Naive thymus-derived CD4-positive, alpha-beta T cell (primary cell): ENCODE measurements at regions of chr2 and their contacts with region 1.

Region 1: GRCh38 chr2:8303322-8303832 is 378.5 kb upstream of the ID2 start:
- DNase-seq: peak in 8 of 9 donors; percentile 10 to 73 (median 54)
- ATAC-seq: peak; percentile 75
- H3K4me3 ChIP-seq: peak overlapping the region; percentile 34
- H3K4me3 Mint-ChIP-seq: peak overlapping the region in 9 of 10 donors; percentile 3 to 77 (median 50)
- H3K27ac ChIP-seq: no peak overlapping the region
- H3K27ac Mint-ChIP-seq: peak overlapping the region in 6 of 9 donors; percentile 15 to 85 (median 47)
- H3K4me1 ChIP-seq: peaks cover 14 to 53% of the 10 kb centered on the region in 2 donors
- H3K4me1 Mint-ChIP-seq: peaks cover 25 to 88% (median 39%) of the 10 kb centered on the region in 7 donors
- H3K27me3 ChIP-seq: no peaks in the 10 kb centered on the region
- H3K27me3 Mint-ChIP-seq: no peaks in the 10 kb centered on the region

Region 2: DNA sequence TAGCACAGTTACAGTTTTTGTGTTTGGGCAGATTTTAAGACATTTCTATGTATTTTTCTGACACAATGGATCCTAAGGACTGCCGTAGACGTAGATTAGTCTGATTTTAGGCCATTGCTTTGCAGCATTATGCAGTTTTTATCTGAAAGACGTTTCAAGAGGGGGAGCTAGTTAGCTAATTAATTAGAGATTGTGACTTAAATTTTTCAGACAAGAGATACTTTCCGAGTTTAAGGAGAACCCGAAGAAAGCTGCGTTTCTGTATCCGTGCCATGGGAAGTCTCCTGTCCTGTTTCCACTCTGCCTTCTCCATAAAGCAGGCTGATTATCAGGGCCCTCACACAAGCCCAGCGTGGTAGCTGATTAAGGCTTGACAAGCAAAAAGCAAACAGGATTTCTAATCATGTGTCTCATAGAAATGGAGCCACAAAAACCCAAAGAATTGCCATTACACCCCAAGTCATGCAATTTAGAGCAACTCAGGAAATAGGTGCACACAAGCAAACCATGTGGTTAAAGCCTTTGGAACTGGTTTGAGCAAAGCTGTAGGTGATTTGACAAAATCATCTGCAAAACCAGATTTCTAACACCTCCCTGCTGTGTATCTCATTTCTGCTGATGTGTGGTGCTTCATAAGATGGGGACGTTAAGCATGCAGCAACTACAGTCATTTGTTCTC is 578.1 kb before region 1 on chr2:
- CTCF ChIA-PET with region 1: no interaction called
- POLR2A ChIA-PET with region 1: no interaction called
- intact Hi-C with region 1: loop called in 1 of 2 experiments (anchors 10 kb)
- DNase-seq: peak in 5 of 9 donors; percentile 17 to 51 (median 38)
- ATAC-seq: peak; percentile 78
- H3K4me3 ChIP-seq: peak overlapping the region; percentile 25
- H3K4me3 Mint-ChIP-seq: peak overlapping the region in 9 of 10 donors; percentile 26 to 86 (median 58)
- H3K27ac ChIP-seq: no peak overlapping the region
- H3K27ac Mint-ChIP-seq: peak overlapping the region; percentile 8 to 89 (median 65)
- H3K4me1 ChIP-seq: peaks cover 17 to 34% of the 10 kb centered on the region in 2 donors
- H3K4me1 Mint-ChIP-seq: peaks cover 13 to 63% (median 34%) of the 10 kb centered on the region in 7 donors
- H3K27me3 ChIP-seq: no peaks in the 10 kb centered on the region
- H3K27me3 Mint-ChIP-seq: no peaks in the 10 kb centered on the region

Region 3: DNA sequence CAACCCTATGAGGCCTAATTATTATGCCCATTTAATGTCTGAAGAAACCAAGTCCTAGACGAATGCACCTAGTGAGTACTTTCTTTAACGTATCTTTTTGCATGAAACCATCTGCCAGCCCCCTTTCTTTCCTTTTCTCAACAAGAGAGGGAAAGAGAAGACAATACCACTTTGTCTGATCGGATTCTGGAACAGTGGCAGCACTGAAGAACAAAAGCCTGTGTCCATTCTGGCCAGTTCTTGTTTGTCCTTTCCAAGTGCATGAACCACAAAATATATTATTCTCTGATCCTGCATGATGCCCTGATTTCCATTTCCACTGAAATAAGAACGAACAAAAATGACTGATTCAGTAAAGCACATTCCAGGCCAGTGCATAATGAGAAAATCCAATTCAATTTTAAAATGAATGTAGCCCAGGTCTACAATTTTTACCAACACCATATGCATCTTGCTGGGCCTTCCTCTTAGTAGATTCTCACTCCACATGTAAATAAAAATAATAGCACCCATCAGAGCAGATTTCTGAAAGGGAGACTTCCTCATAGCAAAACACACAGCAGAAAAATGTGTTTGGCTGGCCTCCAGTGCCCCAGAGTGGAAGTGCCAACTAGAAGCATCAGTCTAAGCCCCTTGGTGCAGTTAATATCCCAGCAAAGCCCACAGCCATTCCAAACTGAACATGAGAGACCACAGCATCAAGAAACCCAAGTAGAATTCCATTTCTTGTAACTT is 44.1 kb before region 1 on chr2:
- CTCF ChIA-PET with region 1: no interaction called
- POLR2A ChIA-PET with region 1: no interaction called
- intact Hi-C with region 1: no loop called
- DNase-seq: no peak
- ATAC-seq: no peak
- H3K4me3 ChIP-seq: no peak overlapping the region
- H3K4me3 Mint-ChIP-seq: no peak overlapping the region
- H3K27ac ChIP-seq: no peak overlapping the region
- H3K27ac Mint-ChIP-seq: no peak overlapping the region
- H3K4me1 ChIP-seq: no peaks in the 10 kb centered on the region
- H3K4me1 Mint-ChIP-seq: peaks cover 2 to 8% (median 4%) of the 10 kb centered on the region in 7 donors
- H3K27me3 ChIP-seq: no peaks in the 10 kb centered on the region
- H3K27me3 Mint-ChIP-seq: peaks cover 0 to 15% (median 0%) of the 10 kb centered on the region in 5 donors

Region 4: GRCh38 chr2:8316356-8316755 is 13.0 kb after region 1 on chr2:
- CTCF ChIA-PET with region 1: no interaction called
- POLR2A ChIA-PET with region 1: no interaction called
- intact Hi-C with region 1: no loop called
- DNase-seq: no peak
- ATAC-seq: no peak
- H3K4me3 ChIP-seq: no peak overlapping the region
- H3K4me3 Mint-ChIP-seq: no peak overlapping the region
- H3K27ac ChIP-seq: no peak overlapping the region
- H3K27ac Mint-ChIP-seq: no peak overlapping the region
- H3K4me1 ChIP-seq: peaks cover 0 to 36% of the 10 kb centered on the region in 2 donors
- H3K4me1 Mint-ChIP-seq: peaks cover 6 to 50% (median 13%) of the 10 kb centered on the region in 7 donors
- H3K27me3 ChIP-seq: no peaks in the 10 kb centered on the region
- H3K27me3 Mint-ChIP-seq: peaks cover 0 to 20% (median 7%) of the 10 kb centered on the region in 5 donors

Region 5: GRCh38 chr2:8334866-8335325 is 31.5 kb after region 1 on chr2:
- CTCF ChIA-PET with region 1: no interaction called
- POLR2A ChIA-PET with region 1: no interaction called
- intact Hi-C with region 1: loop called in 1 of 2 experiments (anchors 2 kb)
- DNase-seq: no peak
- ATAC-seq: peak; percentile 76
- H3K4me3 ChIP-seq: no peak overlapping the region
- H3K4me3 Mint-ChIP-seq: peak overlapping the region in 1 of 10 donors; percentile 3
- H3K27ac ChIP-seq: no peak overlapping the region
- H3K27ac Mint-ChIP-seq: peak overlapping the region in 1 of 9 donors; percentile 62
- H3K4me1 ChIP-seq: peaks cover 14 to 22% of the 10 kb centered on the region in 2 donors
- H3K4me1 Mint-ChIP-seq: peaks cover 13 to 33% (median 14%) of the 10 kb centered on the region in 7 donors
- H3K27me3 ChIP-seq: no peaks in the 10 kb centered on the region
- H3K27me3 Mint-ChIP-seq: peaks cover 0 to 11% (median 0%) of the 10 kb centered on the region in 5 donors

Region 6: GRCh38 chr2:8488001-8488738 is 184.8 kb after region 1 on chr2:
- CTCF ChIA-PET with region 1: no interaction called
- POLR2A ChIA-PET with region 1: no interaction called
- intact Hi-C with region 1: loop called in 1 of 2 experiments (anchors 5 kb)
- DNase-seq: peak in 5 of 9 donors; percentile 10 to 56 (median 41)
- ATAC-seq: peak; percentile 91
- H3K4me3 ChIP-seq: peak overlapping the region; percentile 35
- H3K4me3 Mint-ChIP-seq: peak overlapping the region; percentile 38 to 72 (median 64)
- H3K27ac ChIP-seq: no peak overlapping the region
- H3K27ac Mint-ChIP-seq: peak overlapping the region in 7 of 9 donors; percentile 25 to 88 (median 34)
- H3K4me1 ChIP-seq: peaks cover 8 to 53% of the 10 kb centered on the region in 2 donors
- H3K4me1 Mint-ChIP-seq: peaks cover 13 to 57% (median 15%) of the 10 kb centered on the region in 7 donors
- H3K27me3 ChIP-seq: no peaks in the 10 kb centered on the region
- H3K27me3 Mint-ChIP-seq: peaks cover 0 to 8% (median 0%) of the 10 kb centered on the region in 5 donors

Region 7: GRCh38 chr2:8779795-8780671 is 476.7 kb after region 1 on chr2:
- CTCF ChIA-PET with region 1: no interaction called
- POLR2A ChIA-PET with region 1: no interaction called
- intact Hi-C with region 1: no loop called
- DNase-seq: no peak
- ATAC-seq: no peak
- H3K4me3 ChIP-seq: no peak overlapping the region
- H3K4me3 Mint-ChIP-seq: no peak overlapping the region
- H3K27ac ChIP-seq: no peak overlapping the region
- H3K27ac Mint-ChIP-seq: no peak overlapping the region
- H3K4me1 ChIP-seq: no peaks in the 10 kb centered on the region
- H3K4me1 Mint-ChIP-seq: peaks cover 3 to 21% (median 16%) of the 10 kb centered on the region in 7 donors
- H3K27me3 ChIP-seq: no peaks in the 10 kb centered on the region
- H3K27me3 Mint-ChIP-seq: no peaks in the 10 kb centered on the region